Heart right ventricle (tissue), 16 donors: ENCODE measurements at regions of chr2 and their contacts with region 1.

Region 1: GRCh38 chr2:203453858-203454451 is 81.1 kb downstream of the RAPH1 start:
- DNase-seq: peak in 1 of 2 donors; percentile 36
- ATAC-seq: peak; percentile 44 to 75 (median 68)
- H3K4me3 ChIP-seq: no peak overlapping the region
- H3K27ac ChIP-seq: peak overlapping the region in 2 of 10 donors; percentile 14 to 26
- H3K4me1 ChIP-seq: peaks cover 0 to 34% (median 15%) of the 10 kb centered on the region in 9 donors
- H3K27me3 ChIP-seq: no peaks in the 10 kb centered on the region
- CTCF ChIP-seq: peak; percentile 29 to 88 (median 75)

Region 2: GRCh38 chr2:203225423-203226039 is 228.4 kb before region 1 on chr2:
- intact Hi-C with region 1: loop called in 3 of 10 experiments (anchors 5 to 10 kb)
- DNase-seq: no peak
- ATAC-seq: peak in 2 of 8 donors; percentile 48 to 57
- H3K4me3 ChIP-seq: no peak overlapping the region
- H3K27ac ChIP-seq: no peak overlapping the region
- H3K4me1 ChIP-seq: no peaks in the 10 kb centered on the region
- H3K27me3 ChIP-seq: no peaks in the 10 kb centered on the region
- CTCF ChIP-seq: peak; percentile 39 to 66 (median 60)

Region 3: GRCh38 chr2:203238704-203239526 is 215.0 kb before region 1 on chr2 and contains the start of gene CYP20A1:
- intact Hi-C with region 1: loop called in 2 of 10 experiments (anchors 5 to 10 kb)
- DNase-seq: peak; percentile 96 to 97
- ATAC-seq: peak; percentile 97 to 99 (median 98)
- H3K4me3 ChIP-seq: peak within 1 kb of the TSS; percentile 51 to 95 (median 77)
- H3K27ac ChIP-seq: peak within 1 kb of the TSS; percentile 67 to 98 (median 96)
- H3K4me1 ChIP-seq: peaks cover 0 to 27% (median 16%) of the 10 kb centered on the region in 9 donors
- H3K27me3 ChIP-seq: no peaks in the 10 kb centered on the region
- CTCF ChIP-seq: peak in 7 of 9 donors; percentile 24 to 63 (median 48)
- total RNA-seq, gene CYP20A1: 8.9 to 15.4 (median 10.9) TPM

Region 4: GRCh38 chr2:203327901-203328759 is 125.8 kb before region 1 on chr2 and contains the start of gene ABI2:
- intact Hi-C with region 1: loop called in 1 of 10 experiments (anchors 10 kb)
- DNase-seq: peak; percentile 90 to 91
- ATAC-seq: peak; percentile 95 to 98 (median 97)
- H3K4me3 ChIP-seq: peak within 1 kb of the TSS; percentile 71 to 100 (median 94)
- H3K27ac ChIP-seq: peak within 1 kb of the TSS; percentile 57 to 95 (median 88)
- H3K4me1 ChIP-seq: peaks cover 0 to 38% (median 21%) of the 10 kb centered on the region in 9 donors
- H3K27me3 ChIP-seq: no peaks in the 10 kb centered on the region
- CTCF ChIP-seq: peak in 1 of 9 donors; percentile 8
- total RNA-seq, gene ABI2: 41.6 to 76.8 (median 57.7) TPM

Region 5: GRCh38 chr2:203648273-203648672 is 194.3 kb after region 1 on chr2:
- intact Hi-C with region 1: no loop called
- DNase-seq: no peak
- ATAC-seq: no peak
- H3K4me3 ChIP-seq: no peak overlapping the region
- H3K27ac ChIP-seq: peak overlapping the region in 2 of 10 donors; percentile 16 to 46
- H3K4me1 ChIP-seq: peaks cover 5 to 40% (median 31%) of the 10 kb centered on the region in 9 donors
- H3K27me3 ChIP-seq: no peaks in the 10 kb centered on the region
- CTCF ChIP-seq: no peak